Vagina (tissue), 2 donors: ENCODE measurements at regions of chr16 and their contacts with region 1.

Region 1: GRCh38 chr16:86519649-86520316 is 9.5 kb downstream of the FOXF1 start:
- DNase-seq: no peak
- H3K4me3 ChIP-seq: no peak overlapping the region
- H3K27ac ChIP-seq: no peak overlapping the region
- H3K4me1 ChIP-seq: peaks cover 29% of the 10 kb centered on the region
- H3K27me3 ChIP-seq: no peaks in the 10 kb centered on the region
- CTCF ChIP-seq: peak; percentile 81 to 90 (median 89)
- POLR2A ChIP-seq: no peak

Region 2: GRCh38 chr16:86072328-86073102 is 447.3 kb before region 1 on chr16:
- intact Hi-C with region 1: loop called (anchors 2 kb)
- DNase-seq: no peak
- H3K4me3 ChIP-seq: no peak overlapping the region
- H3K27ac ChIP-seq: no peak overlapping the region
- H3K4me1 ChIP-seq: no peaks in the 10 kb centered on the region
- H3K27me3 ChIP-seq: no peaks in the 10 kb centered on the region
- CTCF ChIP-seq: peak; percentile 53 to 66 (median 53)
- POLR2A ChIP-seq: no peak

Region 3: DNA sequence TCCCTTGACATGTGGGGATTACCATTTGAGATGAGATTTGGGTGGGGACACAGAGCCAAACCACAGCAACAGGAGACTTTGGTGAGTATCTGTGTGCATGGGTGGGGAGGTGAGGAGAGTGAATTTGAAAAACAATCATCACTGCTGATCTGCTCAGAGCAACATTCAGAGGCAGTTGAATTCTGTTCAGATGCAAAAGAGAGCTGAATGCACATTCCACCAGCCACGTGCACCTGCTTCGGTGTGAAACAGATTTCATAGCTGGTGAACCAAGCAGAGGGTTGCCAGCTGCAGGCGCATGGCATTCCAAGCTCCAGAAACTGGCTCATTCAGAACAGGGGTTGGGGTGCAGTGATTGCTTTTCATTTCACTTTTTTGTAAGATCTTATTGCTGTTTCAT is 242.6 kb before region 1 on chr16:
- intact Hi-C with region 1: loop called (anchors 10 kb)
- DNase-seq: no peak
- H3K4me3 ChIP-seq: no peak overlapping the region
- H3K27ac ChIP-seq: no peak overlapping the region
- H3K4me1 ChIP-seq: no peaks in the 10 kb centered on the region
- H3K27me3 ChIP-seq: no peaks in the 10 kb centered on the region
- CTCF ChIP-seq: no peak
- POLR2A ChIP-seq: no peak

Region 4: DNA sequence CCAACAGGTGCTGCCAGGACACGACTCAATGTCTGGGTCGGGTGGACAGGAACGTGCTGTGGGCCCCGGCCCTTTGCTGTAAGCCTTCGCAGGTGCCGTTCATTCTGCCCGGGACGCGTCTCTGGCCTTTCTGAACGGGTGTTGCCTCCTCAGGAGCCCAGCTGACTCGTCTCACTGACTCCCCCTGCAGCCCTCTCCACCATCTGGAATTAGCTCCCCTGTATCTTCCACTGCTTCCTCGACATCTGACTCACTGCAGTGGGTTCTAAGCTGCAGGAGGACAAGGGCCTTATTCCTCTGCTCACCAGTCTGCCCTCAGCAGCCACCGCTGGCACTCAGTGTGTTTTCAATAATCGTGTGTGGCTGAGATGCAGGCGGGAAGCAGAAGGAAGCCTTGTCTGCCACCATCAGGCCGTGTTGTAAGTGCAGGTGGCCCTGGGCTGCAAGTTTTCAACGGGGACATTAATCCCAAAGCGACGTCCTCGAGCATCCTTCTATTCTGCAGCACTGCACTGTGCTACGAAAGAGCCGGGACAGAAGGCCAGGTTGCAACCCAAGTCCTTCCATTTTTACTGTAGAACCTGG is 314.8 kb after region 1 on chr16:
- intact Hi-C with region 1: no loop called
- DNase-seq: no peak
- H3K4me3 ChIP-seq: no peak overlapping the region
- H3K27ac ChIP-seq: no peak overlapping the region
- H3K4me1 ChIP-seq: no peaks in the 10 kb centered on the region
- H3K27me3 ChIP-seq: no peaks in the 10 kb centered on the region
- CTCF ChIP-seq: no peak
- POLR2A ChIP-seq: no peak